PC-9 (cell line): ENCODE measurements at regions of chr3 and their contacts with region 1.

Region 1: DNA sequence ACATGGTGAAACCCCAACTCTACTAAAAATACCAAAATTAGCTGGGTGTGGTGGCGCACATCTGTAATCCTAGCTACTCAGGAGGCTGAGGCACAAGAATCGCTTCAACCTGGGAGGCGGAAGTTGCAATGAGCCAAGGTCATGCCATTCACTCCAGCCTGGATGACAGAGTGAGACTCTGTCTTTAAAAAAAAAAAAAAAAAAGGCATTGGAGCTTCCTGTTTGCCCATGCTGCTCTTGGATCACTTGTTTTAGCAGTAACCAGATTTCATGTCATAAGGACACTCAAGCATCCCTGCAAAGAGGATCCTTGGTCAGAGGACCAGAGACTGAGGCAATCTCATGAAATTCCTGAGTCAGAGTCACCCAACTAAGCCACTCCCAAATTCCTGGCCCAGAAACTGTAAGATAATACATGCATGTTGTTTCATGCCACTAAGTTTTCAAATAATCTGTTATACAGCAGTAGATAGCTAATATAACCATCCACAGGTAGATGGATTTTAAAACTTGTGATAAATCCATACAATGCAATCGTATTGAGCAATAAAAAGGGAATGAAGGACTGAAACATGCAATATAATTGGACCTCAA is 82.0 kb upstream of the XXYLT1 start:
- DNase-seq: peak; percentile 51 to 65
- H3K4me3 ChIP-seq: no peak overlapping the region
- H3K27ac ChIP-seq: peak overlapping the region; percentile 82
- H3K4me1 ChIP-seq: peaks cover 12% of the 10 kb centered on the region
- H3K27me3 ChIP-seq: no peaks in the 10 kb centered on the region
- CTCF ChIP-seq: no peak

Region 2: DNA sequence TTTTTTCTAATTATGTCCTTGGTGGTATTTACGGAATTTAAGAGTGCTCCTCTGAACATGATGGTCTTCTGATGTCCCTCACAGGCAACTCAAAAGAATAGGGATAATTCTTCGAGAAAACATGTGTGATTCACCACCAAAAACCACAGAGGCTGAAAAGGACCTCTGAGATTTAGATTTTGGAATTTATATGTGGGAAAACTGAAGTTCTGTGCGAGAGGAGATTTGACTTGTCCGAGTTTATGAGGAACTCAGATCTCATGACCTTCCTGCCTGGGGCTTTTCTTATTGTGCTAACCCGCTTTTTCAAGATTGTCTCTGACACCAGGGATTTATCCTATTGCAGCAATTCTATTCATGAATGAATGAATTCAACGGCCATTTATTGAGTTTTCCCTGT is 524.9 kb before region 1 on chr3:
- CTCF ChIA-PET with region 1: no interaction called
- POLR2A ChIA-PET with region 1: no interaction called
- intact Hi-C with region 1: no loop called
- DNase-seq: no peak
- H3K4me3 ChIP-seq: no peak overlapping the region
- H3K27ac ChIP-seq: no peak overlapping the region
- H3K4me1 ChIP-seq: no peaks in the 10 kb centered on the region
- H3K27me3 ChIP-seq: no peaks in the 10 kb centered on the region
- CTCF ChIP-seq: no peak

Region 3: GRCh38 chr3:195411836-195412235 is 58.8 kb after region 1 on chr3:
- CTCF ChIA-PET with region 1: no interaction called
- POLR2A ChIA-PET with region 1: interaction called, 12 read pairs
- intact Hi-C with region 1: no loop called
- DNase-seq: no peak
- H3K4me3 ChIP-seq: no peak overlapping the region
- H3K27ac ChIP-seq: no peak overlapping the region
- H3K4me1 ChIP-seq: peaks cover 5% of the 10 kb centered on the region; the same call in 1 of the 2 replicates
- H3K27me3 ChIP-seq: no peaks in the 10 kb centered on the region
- CTCF ChIP-seq: no peak